IMR-90 (cell line): ENCODE measurements at regions of chr1 and their contacts with region 1.

Region 1: GRCh38 chr1:66764994-66765578 is 12.8 kb downstream of the DYNLT5 start:
- DNase-seq: peak; percentile 66
- ATAC-seq: peak; percentile 93
- H3K4me3 ChIP-seq: no peak overlapping the region
- H3K27ac ChIP-seq: no peak overlapping the region
- H3K4me1 ChIP-seq: no peaks in the 10 kb centered on the region
- H3K27me3 ChIP-seq: no peaks in the 10 kb centered on the region; the same call in 1 of the 2 replicates
- CTCF ChIP-seq: peak; percentile 83
- POLR2A ChIP-seq: no peak
- RAD21 ChIP-seq: peak; percentile 82

Region 2: DNA sequence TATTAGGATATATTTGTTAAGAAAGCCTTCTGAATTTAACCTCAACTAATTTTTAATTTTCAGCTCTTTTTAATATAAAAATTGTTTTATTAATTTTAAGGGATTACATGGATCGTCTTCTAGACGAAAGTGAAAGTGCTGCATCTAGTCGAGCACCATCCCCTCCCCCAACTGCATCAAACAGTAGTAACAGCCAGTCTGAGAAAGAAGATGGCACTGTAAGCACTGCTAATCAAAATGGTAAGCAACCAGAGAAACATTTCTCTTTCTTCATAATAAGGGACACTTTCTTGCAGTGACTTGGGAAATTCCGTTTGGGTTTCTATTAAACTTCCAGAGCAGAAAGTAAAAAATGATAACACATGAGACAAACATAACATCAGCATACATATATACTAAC is 216.6 kb after region 1 on chr1:
- CTCF ChIA-PET with region 1: no interaction called
- POLR2A ChIA-PET with region 1: no interaction called
- dilution Hi-C with region 1: no loop called
- in situ Hi-C with region 1: no loop called
- intact Hi-C with region 1: loop called (anchors 5 kb)
- DNase-seq: peak; percentile 18
- ATAC-seq: peak; percentile 53; the same call in 1 of the 2 replicates
- H3K4me3 ChIP-seq: no peak overlapping the region
- H3K27ac ChIP-seq: no peak overlapping the region
- H3K4me1 ChIP-seq: no peaks in the 10 kb centered on the region
- H3K27me3 ChIP-seq: no peaks in the 10 kb centered on the region
- CTCF ChIP-seq: no peak
- POLR2A ChIP-seq: no peak
- RAD21 ChIP-seq: no peak

Region 3: GRCh38 chr1:67149179-67149770 is 384.2 kb after region 1 on chr1:
- CTCF ChIA-PET with region 1: interaction called, 7 read pairs
- POLR2A ChIA-PET with region 1: no interaction called
- dilution Hi-C with region 1: no loop called
- in situ Hi-C with region 1: loop called (anchors 5 kb)
- intact Hi-C with region 1: loop called (anchors 1 kb)
- DNase-seq: peak; percentile 82
- ATAC-seq: peak; percentile 98
- H3K4me3 ChIP-seq: no peak overlapping the region
- H3K27ac ChIP-seq: no peak overlapping the region
- H3K4me1 ChIP-seq: no peaks in the 10 kb centered on the region
- H3K27me3 ChIP-seq: no peaks in the 10 kb centered on the region; the same call in 1 of the 2 replicates
- CTCF ChIP-seq: peak; percentile 99
- POLR2A ChIP-seq: 0 out of 2 replicates have a peak, but pooled peaks have one; percentile 29
- RAD21 ChIP-seq: peak; percentile 97

Region 4: GRCh38 chr1:67489643-67490042 is 724.6 kb after region 1 on chr1:
- CTCF ChIA-PET with region 1: no interaction called
- POLR2A ChIA-PET with region 1: no interaction called
- dilution Hi-C with region 1: no loop called
- in situ Hi-C with region 1: loop called (anchors 25 kb)
- intact Hi-C with region 1: no loop called
- DNase-seq: peak; percentile 15
- ATAC-seq: no peak
- H3K4me3 ChIP-seq: no peak overlapping the region
- H3K27ac ChIP-seq: no peak overlapping the region
- H3K4me1 ChIP-seq: no peaks in the 10 kb centered on the region
- H3K27me3 ChIP-seq: peaks cover 14% of the 10 kb centered on the region
- CTCF ChIP-seq: peak; percentile 21; the same call in 1 of the 2 replicates
- POLR2A ChIP-seq: no peak
- RAD21 ChIP-seq: peak; percentile 36